CD14-positive monocyte (primary cell): ENCODE measurements at regions of chr15 and their contacts with region 1.

Region 1: GRCh38 chr15:31488426-31489204 is 162.0 kb downstream of the KLF13 start:
- DNase-seq: peak; percentile 78 to 87 (median 82)
- H3K4me3 ChIP-seq: no peak overlapping the region
- H3K4me3 Mint-ChIP-seq: peak overlapping the region in 1 of 2 donors; percentile 21
- H3K27ac ChIP-seq: no peak overlapping the region
- H3K27ac Mint-ChIP-seq: peak overlapping the region in 2 of 7 donors; percentile 18 to 22
- H3K4me1 ChIP-seq: peaks cover 10 to 19% of the 10 kb centered on the region in 2 donors
- H3K4me1 Mint-ChIP-seq: peaks cover 23% of the 10 kb centered on the region
- H3K27me3 ChIP-seq: peaks cover 3 to 35% of the 10 kb centered on the region in 2 donors
- H3K27me3 Mint-ChIP-seq: peaks cover 25 to 42% (median 33%) of the 10 kb centered on the region in 3 donors
- CTCF ChIP-seq: peak; percentile 94

Region 2: DNA sequence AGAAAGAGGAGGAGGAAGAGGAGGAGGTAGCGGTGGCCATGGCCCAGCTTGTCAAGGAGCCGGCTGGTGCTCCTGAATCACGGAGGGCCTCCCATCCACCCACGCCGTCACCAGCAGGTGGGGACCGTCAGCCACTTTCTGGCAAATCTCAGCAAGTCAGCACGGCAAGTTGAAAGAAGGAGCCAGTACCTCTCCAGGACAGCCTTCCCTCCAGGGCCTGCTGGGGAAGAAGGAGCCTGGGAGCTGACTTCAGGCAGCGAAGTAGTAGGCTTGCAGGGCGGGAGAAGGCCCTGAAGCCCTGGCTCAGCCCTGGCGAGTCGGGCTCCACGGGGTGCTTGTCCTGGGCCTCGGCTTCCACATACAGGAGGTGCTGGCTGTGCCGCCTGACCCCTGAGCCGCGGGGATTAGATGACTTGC is 287.9 kb before region 1 on chr15:
- intact Hi-C with region 1: loop called (anchors 5 kb)
- DNase-seq: peak; percentile 62 to 67 (median 62)
- H3K4me3 ChIP-seq: no peak overlapping the region
- H3K4me3 Mint-ChIP-seq: no peak overlapping the region
- H3K27ac ChIP-seq: no peak overlapping the region
- H3K27ac Mint-ChIP-seq: peak overlapping the region in 1 of 7 donors; percentile 19
- H3K4me1 ChIP-seq: peaks cover 17 to 40% of the 10 kb centered on the region in 2 donors
- H3K4me1 Mint-ChIP-seq: peaks cover 40% of the 10 kb centered on the region
- H3K27me3 ChIP-seq: no peaks in the 10 kb centered on the region
- H3K27me3 Mint-ChIP-seq: peaks cover 3 to 7% (median 7%) of the 10 kb centered on the region in 3 donors
- CTCF ChIP-seq: peak; percentile 39

Region 3: DNA sequence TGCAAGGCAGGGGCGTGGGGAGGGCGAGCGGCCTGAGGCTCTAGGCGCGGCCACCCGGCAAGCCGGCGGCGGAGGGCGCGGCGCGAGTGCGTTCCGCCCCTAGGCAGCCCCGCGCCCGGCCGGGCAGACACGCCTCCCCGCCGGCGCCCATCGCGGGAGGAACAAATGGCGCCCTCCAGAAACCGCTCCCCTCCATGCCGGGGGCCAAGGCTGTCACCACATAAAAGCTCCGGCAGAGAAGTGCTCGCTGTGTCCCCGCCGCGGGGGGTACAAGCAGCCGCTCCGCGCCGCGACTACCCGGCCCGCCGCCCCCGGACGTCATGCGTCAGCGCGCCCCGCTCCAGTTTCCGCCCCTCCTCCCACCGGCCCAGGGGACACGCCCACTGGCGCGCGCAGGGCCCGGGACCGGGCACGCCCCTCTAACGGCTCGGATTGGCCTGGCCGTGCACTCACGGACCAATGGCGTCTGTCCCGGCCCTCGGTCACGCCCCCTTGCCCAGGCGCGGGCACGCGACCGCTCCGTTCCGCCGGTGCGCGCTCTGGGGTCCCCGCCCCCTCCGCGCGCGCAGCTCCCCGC is 162.4 kb before region 1 on chr15:
- intact Hi-C with region 1: loop called in 1 of 2 experiments (anchors 5 kb)
- DNase-seq: peak; percentile 98 to 99 (median 98)
- H3K4me3 ChIP-seq: peak overlapping the region; percentile 80 to 99 (median 97)
- H3K4me3 Mint-ChIP-seq: peak overlapping the region; percentile 90 to 93
- H3K27ac ChIP-seq: peak overlapping the region; percentile 91 to 94
- H3K27ac Mint-ChIP-seq: peak overlapping the region; percentile 83 to 95 (median 88)
- H3K4me1 ChIP-seq: peaks cover 44 to 57% of the 10 kb centered on the region in 2 donors
- H3K4me1 Mint-ChIP-seq: peaks cover 56% of the 10 kb centered on the region
- H3K27me3 ChIP-seq: no peaks in the 10 kb centered on the region
- H3K27me3 Mint-ChIP-seq: peaks cover 0 to 1% (median 0%) of the 10 kb centered on the region in 3 donors
- CTCF ChIP-seq: no peak

Region 4: DNA sequence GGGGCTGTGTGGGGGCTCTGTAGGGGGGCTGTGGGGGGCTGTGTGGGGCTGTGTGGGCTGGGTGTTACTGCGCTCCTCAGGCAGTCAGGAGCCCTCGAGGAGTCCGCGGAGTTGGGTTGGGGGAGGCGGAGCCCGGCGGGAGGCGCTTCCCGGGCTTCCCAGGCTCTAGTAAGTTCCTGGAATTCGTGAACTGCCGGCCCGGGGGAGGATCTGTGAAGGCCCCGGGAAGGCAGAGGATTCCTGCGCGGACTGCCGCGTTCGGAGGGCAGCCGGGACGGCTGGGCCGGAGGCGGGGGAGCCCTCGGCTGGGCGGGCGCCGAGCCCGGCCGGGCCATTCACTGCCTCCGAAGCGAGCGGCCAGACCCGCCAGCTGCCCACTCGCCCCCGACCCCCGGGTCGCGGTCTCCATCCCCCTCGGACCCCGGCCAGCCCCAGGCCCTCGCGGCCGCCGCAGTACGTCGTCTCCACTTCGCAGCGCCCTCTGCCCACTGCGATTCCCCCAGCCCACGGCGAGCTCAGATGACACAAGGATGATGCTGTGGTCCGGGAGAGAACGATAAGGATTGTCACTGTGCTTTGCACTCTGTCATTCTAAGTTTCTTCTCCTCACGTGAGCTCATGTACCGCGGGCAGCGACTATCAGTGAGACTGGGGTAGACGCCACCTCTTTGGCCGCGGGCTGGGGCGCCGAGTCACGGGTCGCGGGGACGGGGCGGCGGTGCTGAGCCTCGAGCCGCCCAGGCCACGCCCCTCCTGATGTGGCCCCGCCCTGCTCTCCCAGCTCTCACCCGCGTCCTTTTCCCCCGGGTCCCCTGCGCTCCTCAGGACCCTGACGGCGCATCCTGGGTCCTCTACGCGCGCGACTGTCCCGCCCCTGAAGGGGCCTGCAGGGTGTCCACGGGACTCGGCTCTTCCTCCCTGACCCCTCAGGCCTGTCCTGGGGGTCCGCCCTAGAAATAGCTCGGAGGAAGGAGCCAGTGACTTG is 96.6 kb before region 1 on chr15:
- intact Hi-C with region 1: loop called in 1 of 2 experiments (anchors 10 kb)
- DNase-seq: peak; percentile 84 to 88 (median 88)
- H3K4me3 ChIP-seq: peak overlapping the region; percentile 37 to 77 (median 47)
- H3K4me3 Mint-ChIP-seq: peak overlapping the region; percentile 83 to 93
- H3K27ac ChIP-seq: peak overlapping the region in 1 of 2 donors; percentile 41
- H3K27ac Mint-ChIP-seq: peak overlapping the region in 5 of 7 donors; percentile 50 to 80 (median 55)
- H3K4me1 ChIP-seq: peaks cover 17 to 24% of the 10 kb centered on the region in 2 donors
- H3K4me1 Mint-ChIP-seq: peaks cover 26% of the 10 kb centered on the region
- H3K27me3 ChIP-seq: peaks cover 11 to 35% of the 10 kb centered on the region in 2 donors
- H3K27me3 Mint-ChIP-seq: peaks cover 33 to 59% (median 52%) of the 10 kb centered on the region in 3 donors
- CTCF ChIP-seq: no peak

Region 5: DNA sequence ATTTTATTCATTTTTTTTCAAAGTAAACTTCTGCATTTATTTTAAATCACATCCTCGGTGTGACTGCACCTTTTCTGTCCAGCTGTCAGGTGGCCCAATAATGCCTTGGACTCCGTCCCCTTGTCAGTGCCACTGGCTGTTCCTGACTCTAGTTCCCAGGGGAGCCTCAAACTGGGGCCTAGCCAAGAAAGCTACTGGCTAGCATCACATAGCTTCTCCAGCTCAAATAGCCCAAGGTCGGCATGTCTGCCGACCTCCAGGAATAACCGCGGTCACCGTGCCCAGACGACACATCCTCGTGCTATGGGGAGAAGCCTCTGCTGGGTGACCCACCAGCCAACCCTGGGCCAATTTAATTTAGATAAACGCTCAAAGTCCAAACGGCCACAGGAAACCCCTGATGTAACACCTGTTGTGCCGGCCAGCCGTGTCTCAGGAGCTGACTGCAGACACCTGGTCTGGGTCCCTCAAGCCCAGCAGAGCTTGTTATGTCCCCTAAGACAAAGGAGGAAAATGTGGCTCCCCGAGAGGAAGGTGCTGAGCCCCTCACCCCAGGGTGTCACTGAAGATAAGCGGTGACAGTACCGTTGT is 35.9 kb before region 1 on chr15:
- intact Hi-C with region 1: loop called in 1 of 2 experiments (anchors 5 kb)
- DNase-seq: no peak
- H3K4me3 ChIP-seq: no peak overlapping the region
- H3K4me3 Mint-ChIP-seq: no peak overlapping the region
- H3K27ac ChIP-seq: no peak overlapping the region
- H3K27ac Mint-ChIP-seq: peak overlapping the region in 1 of 7 donors; percentile 75
- H3K4me1 ChIP-seq: peaks cover 14 to 19% of the 10 kb centered on the region in 2 donors
- H3K4me1 Mint-ChIP-seq: peaks cover 22% of the 10 kb centered on the region
- H3K27me3 ChIP-seq: no peaks in the 10 kb centered on the region
- H3K27me3 Mint-ChIP-seq: peaks cover 0 to 2% (median 0%) of the 10 kb centered on the region in 3 donors
- CTCF ChIP-seq: no peak

Region 6: GRCh38 chr15:31550211-31550977 is 61.8 kb after region 1 on chr15:
- intact Hi-C with region 1: no loop called
- DNase-seq: no peak
- H3K4me3 ChIP-seq: no peak overlapping the region
- H3K4me3 Mint-ChIP-seq: no peak overlapping the region
- H3K27ac ChIP-seq: no peak overlapping the region
- H3K27ac Mint-ChIP-seq: no peak overlapping the region
- H3K4me1 ChIP-seq: no peaks in the 10 kb centered on the region
- H3K4me1 Mint-ChIP-seq: no peaks in the 10 kb centered on the region
- H3K27me3 ChIP-seq: no peaks in the 10 kb centered on the region
- H3K27me3 Mint-ChIP-seq: peaks cover 0 to 6% (median 2%) of the 10 kb centered on the region in 3 donors
- CTCF ChIP-seq: no peak

Region 7: DNA sequence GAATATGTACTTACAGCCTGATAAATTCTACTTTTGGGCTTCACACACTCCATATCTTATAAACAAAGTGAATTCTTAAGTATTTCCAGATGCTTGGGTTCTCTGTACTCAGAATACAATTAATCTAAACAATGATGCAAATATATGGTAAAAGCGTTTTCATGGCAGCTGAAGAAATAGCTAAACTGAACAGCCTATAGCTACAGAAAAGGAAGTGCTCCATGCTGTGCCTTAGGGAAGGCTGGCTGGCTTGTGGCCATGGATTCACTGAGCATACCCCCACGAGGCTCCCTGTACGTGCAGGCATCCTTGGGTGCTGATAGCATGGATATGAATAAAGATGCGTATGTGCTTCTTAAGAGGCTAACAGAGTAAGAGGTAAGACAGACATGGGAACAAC is 102.0 kb after region 1 on chr15:
- intact Hi-C with region 1: no loop called
- DNase-seq: no peak
- H3K4me3 ChIP-seq: no peak overlapping the region
- H3K4me3 Mint-ChIP-seq: no peak overlapping the region
- H3K27ac ChIP-seq: no peak overlapping the region
- H3K27ac Mint-ChIP-seq: no peak overlapping the region
- H3K4me1 ChIP-seq: no peaks in the 10 kb centered on the region
- H3K4me1 Mint-ChIP-seq: no peaks in the 10 kb centered on the region
- H3K27me3 ChIP-seq: no peaks in the 10 kb centered on the region
- H3K27me3 Mint-ChIP-seq: peaks cover 0 to 3% (median 0%) of the 10 kb centered on the region in 3 donors
- CTCF ChIP-seq: no peak